HEK293T (cell line): ENCODE measurements at regions of chr15 and their contacts with region 1.

Region 1: GRCh38 chr15:77821188-77821958 is 188.7 kb upstream of the LINGO1 start:
- DNase-seq: peak; percentile 80

Region 2: DNA sequence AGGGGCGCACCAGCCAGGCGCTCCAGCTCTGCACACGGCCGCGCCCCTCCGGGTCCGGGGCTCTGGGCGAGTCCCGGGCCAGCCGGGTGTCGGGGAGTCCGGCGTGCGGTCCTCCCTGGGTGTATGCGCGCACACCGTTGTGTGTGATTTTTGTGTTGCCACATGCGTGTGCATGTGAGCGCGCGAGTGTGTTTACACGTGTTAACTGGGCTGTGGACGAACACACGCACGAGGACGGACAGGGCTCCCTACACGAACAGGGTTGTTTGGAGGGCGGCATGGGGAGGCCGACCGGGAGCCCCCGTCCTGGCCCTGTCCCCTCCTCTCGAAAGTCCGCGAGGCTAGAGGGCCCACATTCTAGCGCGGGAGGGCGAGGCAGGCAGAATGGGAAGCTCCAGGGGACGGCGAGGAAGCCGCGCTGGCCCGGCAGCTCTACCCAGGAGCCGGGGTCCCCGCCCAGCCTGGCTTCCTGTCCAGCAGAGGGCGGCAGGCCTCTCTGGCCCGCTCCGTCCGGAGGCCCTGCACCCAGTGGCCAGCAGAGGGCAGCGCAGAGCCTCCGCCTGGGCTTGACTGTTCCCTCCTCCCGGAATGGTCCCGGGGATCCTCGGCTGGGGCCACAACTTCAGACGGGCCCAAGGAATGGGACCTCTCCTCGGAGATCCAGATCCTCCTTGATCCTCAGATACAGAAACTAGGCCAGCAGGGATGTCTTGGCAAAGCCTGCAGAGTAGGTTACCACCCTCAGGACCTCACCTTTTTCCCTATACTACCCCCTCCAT is 188.1 kb before region 1 on chr15:
- CTCF ChIA-PET with region 1: interaction called, 35 read pairs
- POLR2A ChIA-PET with region 1: interaction called, 3 read pairs
- DNase-seq: peak; percentile 94

Region 3: GRCh38 chr15:77659350-77660321 is 161.7 kb before region 1 on chr15:
- CTCF ChIA-PET with region 1: interaction called, 21 read pairs
- POLR2A ChIA-PET with region 1: interaction called, 3 read pairs
- DNase-seq: peak; percentile 90

Region 4: DNA sequence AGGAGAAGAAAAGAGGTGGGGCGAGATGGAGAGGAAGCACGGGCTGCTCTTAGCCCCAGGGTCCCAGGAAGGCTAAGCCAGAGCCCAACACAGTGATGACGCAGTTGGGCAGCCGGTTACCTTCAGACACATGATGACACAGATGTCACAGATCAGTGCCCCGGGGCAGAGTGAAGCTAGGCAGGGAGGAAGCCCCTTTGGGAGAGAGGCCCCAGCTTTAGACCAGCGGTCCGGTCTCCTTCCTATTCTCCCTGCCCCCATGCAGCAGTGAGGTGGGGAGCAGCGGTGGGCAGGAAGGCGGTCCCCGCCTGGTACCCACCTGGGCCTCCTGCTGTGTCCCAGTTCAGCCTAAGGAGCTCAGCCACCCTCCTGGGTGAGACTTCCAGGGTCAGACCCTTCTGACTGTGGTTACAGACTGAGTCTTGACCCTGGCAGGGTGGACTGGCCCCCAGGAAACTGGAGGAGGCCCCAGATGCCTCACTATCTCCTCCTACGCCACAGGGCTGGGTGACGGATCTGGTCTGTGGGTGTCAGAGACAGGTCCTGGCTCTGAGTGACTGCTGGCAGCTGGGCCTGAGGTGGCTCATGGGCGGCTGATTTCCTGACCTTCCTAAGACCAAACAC is 149.9 kb before region 1 on chr15:
- CTCF ChIA-PET with region 1: no interaction called
- POLR2A ChIA-PET with region 1: no interaction called
- DNase-seq: no peak

Region 5: GRCh38 chr15:77836121-77836692 is 14.8 kb after region 1 on chr15:
- CTCF ChIA-PET with region 1: interaction called, 18 read pairs
- POLR2A ChIA-PET with region 1: no interaction called
- DNase-seq: peak; percentile 90

Region 6: DNA sequence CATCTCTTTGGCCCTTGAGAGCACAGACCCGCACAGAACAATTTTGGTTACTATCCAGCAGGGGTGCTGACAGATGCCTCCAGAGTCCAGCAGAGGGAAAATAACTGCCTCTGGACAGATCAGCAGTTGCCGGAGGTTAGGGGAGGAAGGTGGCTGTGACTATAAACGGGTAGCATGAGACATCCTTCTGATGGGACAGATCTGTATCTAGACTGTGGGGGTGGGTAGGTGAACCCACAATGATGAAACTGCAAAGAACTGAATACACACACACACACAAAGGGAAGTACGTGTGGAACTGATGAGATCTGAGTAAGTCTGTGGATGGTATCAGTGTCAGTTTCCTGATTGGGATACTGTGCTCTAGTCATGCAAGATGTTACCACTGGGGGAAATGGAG is 968.7 kb after region 1 on chr15:
- CTCF ChIA-PET with region 1: no interaction called
- POLR2A ChIA-PET with region 1: no interaction called
- DNase-seq: no peak